Activated T-helper 1 cell treated with anti-CD3 and anti-CD28 coated beads, Interleukin-12 subunit alpha, Interleukin-12 subunit beta, Interleukin-2, Interleukin-4 antibody, amounts not matched to agents 30 ng/mL and 10 ng/mL and 1 ng/mL, durations not matched to agents 14 hours and 24 hours and 36 hours (primary cell): ENCODE measurements at regions of chr4 and their contacts with region 1.

Region 1: GRCh38 chr4:83110223-83110945 is 4.1 kb downstream of the PLAC8 start:
- DNase-seq: peak; percentile 86
- H3K4me3 Mint-ChIP-seq: peak overlapping the region; percentile 89
- H3K27ac Mint-ChIP-seq: peak overlapping the region; percentile 93
- H3K4me1 Mint-ChIP-seq: peaks cover 58% of the 10 kb centered on the region
- H3K27me3 Mint-ChIP-seq: no peaks in the 10 kb centered on the region

Region 2: DNA sequence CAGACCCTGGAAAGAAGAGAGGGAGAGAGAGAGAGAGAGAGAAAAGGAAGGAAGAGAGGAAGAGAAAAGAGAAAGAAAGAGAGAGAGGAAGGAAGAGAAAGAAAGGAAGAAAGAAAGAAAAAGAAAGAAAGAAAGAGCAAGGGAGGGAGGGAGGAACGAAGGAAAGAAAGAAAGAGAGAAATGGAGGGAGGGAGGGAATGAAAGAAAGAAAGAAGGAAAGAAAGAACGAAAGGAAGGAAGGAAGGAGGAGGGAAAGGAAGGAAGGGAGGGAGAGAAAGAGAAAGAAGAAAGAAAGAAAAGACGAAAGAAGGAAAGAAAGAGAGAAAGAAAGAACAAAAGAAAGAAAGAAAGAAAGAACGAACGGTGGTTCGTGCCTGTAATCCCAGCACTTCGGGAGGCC is 870.0 kb before region 1 on chr4:
- intact Hi-C with region 1: no loop called
- DNase-seq: no peak
- H3K4me3 Mint-ChIP-seq: no peak overlapping the region
- H3K27ac Mint-ChIP-seq: no peak overlapping the region
- H3K4me1 Mint-ChIP-seq: no peaks in the 10 kb centered on the region
- H3K27me3 Mint-ChIP-seq: peaks cover 1% of the 10 kb centered on the region

Region 3: DNA sequence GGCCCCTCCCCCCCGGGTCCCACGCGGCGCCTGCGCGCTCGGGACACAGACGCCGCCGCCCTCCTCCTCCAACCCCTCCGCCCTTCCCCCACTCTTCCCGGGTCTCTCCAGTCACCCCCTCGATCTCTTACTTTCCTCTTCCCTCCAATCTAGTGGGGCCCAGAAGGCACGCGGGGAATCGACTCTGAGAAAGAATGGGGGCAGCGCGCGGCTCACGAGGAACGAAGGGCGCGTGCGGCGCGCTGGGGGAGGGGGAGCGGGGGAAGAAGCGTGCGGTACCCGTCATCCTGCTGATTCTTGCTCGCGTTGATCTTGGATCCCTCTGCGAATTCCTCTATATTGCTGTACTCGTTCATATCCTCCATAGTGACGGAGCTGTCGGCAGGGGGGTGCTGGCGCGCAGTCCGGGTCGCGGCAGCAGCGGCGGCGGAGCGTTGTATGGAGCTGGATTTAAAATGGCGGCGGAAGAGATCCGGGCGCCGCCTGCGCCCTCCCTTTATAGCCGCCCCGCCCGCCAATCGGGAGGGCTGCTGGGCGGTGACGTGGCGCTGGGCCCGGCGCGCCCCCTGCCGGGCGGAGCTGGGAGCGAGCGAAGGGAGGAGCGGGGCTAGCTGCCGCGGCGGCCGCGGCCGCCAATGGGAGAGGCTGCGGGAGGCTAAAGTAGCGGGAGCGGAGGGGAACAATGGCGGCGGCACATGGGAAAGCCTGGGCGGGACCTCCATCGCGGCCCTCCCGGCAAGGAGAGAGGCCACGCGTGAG is 681.2 kb before region 1 on chr4:
- intact Hi-C with region 1: loop called (anchors 1 kb)
- DNase-seq: peak; percentile 90
- H3K4me3 Mint-ChIP-seq: peak overlapping the region; percentile 99
- H3K27ac Mint-ChIP-seq: peak overlapping the region; percentile 99
- H3K4me1 Mint-ChIP-seq: peaks cover 69% of the 10 kb centered on the region
- H3K27me3 Mint-ChIP-seq: no peaks in the 10 kb centered on the region

Region 4: DNA sequence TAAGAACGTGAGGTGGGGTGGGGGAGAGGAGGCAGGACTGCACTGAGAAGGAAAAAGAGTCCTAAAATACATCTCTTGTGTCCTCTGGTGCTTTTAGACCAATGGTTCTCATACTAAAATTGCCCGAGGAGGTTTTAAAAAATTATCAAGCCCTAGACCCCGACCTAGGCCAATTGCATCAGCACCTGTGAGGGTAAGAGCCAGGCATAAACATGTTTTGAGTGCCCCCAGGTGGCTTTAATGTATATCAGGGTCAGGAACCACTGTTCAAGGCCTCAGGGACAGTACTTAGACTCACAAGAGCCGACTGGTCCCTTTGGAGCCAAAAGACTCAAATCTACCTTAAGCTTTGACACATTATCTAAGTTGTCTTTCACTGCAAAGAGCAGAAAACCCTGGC is 511.0 kb before region 1 on chr4:
- intact Hi-C with region 1: no loop called
- DNase-seq: no peak
- H3K4me3 Mint-ChIP-seq: no peak overlapping the region
- H3K27ac Mint-ChIP-seq: no peak overlapping the region
- H3K4me1 Mint-ChIP-seq: no peaks in the 10 kb centered on the region
- H3K27me3 Mint-ChIP-seq: peaks cover 10% of the 10 kb centered on the region

Region 5: GRCh38 chr4:83012687-83013419 is 97.5 kb before region 1 on chr4:
- intact Hi-C with region 1: loop called (anchors 1 kb)
- DNase-seq: peak; percentile 97
- H3K4me3 Mint-ChIP-seq: peak overlapping the region; percentile 91
- H3K27ac Mint-ChIP-seq: peak overlapping the region; percentile 92
- H3K4me1 Mint-ChIP-seq: peaks cover 45% of the 10 kb centered on the region
- H3K27me3 Mint-ChIP-seq: no peaks in the 10 kb centered on the region

Region 6: GRCh38 chr4:83067058-83067639 is 43.2 kb before region 1 on chr4:
- intact Hi-C with region 1: no loop called
- DNase-seq: no peak
- H3K4me3 Mint-ChIP-seq: no peak overlapping the region
- H3K27ac Mint-ChIP-seq: no peak overlapping the region
- H3K4me1 Mint-ChIP-seq: peaks cover 9% of the 10 kb centered on the region
- H3K27me3 Mint-ChIP-seq: no peaks in the 10 kb centered on the region

Region 7: GRCh38 chr4:83128240-83128929 is 18.0 kb after region 1 on chr4:
- intact Hi-C with region 1: loop called (anchors 1 kb)
- DNase-seq: no peak
- H3K4me3 Mint-ChIP-seq: no peak overlapping the region
- H3K27ac Mint-ChIP-seq: no peak overlapping the region
- H3K4me1 Mint-ChIP-seq: peaks cover 28% of the 10 kb centered on the region
- H3K27me3 Mint-ChIP-seq: peaks cover 5% of the 10 kb centered on the region

Region 8: GRCh38 chr4:83231620-83232076 is 121.3 kb after region 1 on chr4:
- intact Hi-C with region 1: loop called (anchors 1 kb)
- DNase-seq: peak; percentile 63
- H3K4me3 Mint-ChIP-seq: peak overlapping the region; percentile 52
- H3K27ac Mint-ChIP-seq: peak overlapping the region; percentile 69
- H3K4me1 Mint-ChIP-seq: peaks cover 59% of the 10 kb centered on the region
- H3K27me3 Mint-ChIP-seq: peaks cover 11% of the 10 kb centered on the region

Region 9: DNA sequence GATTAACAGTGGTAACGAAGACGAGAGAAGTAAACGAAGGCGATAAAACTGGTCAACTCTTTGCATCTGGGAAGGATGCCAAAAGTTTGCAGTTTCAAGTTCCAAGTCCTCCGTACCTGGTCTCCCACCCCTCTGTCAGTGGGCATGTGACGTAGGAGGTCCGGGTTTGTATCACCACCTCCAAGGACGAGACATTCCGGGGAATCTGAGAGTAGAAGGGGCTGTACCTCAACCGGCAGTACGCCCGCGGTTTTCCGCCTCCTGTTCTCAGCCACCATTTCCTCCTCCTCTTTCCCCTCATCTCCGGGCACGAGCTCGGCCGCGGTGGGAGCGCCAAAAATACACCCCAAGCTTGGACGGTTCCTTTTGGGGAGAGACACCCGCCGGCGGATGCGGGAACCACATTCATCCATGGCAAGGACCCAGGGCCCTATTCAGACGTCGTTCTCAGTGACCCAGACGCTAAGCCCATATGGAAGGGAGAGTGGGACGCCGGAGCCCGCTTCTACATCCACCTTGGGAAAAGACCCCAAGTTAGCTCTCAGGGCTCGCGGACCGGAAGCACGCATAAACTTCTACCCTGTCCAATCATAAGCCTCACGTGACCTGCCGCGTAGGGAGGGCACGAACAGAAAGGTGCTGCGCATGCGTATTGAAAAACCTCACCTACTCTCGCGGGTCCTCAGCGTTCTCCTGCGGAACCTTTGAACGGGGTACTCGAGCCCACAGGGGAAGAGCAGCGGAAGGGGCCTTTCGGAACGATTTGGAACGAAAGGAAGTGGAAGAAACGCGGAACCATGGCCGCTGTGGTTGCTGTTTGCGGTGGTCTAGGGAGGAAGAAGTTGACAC is 345.1 kb after region 1 on chr4 and contains the starts of genes HELQ and MRPS18C:
- intact Hi-C with region 1: loop called (anchors 1 kb)
- DNase-seq: peak; percentile 95
- H3K4me3 Mint-ChIP-seq: peak within 1 kb of the TSS; percentile 96
- H3K27ac Mint-ChIP-seq: peak within 1 kb of the TSS; percentile 98
- H3K4me1 Mint-ChIP-seq: peaks cover 45% of the 10 kb centered on the region
- H3K27me3 Mint-ChIP-seq: no peaks in the 10 kb centered on the region
- total RNA-seq, gene HELQ: 8.8 and 9.7 TPM in 2 replicates
- total RNA-seq, gene MRPS18C: 76.8 and 80.3 TPM in 2 replicates